ENCODE measurements at regions of chr6 and their contacts with region 1.

Region 1: DNA sequence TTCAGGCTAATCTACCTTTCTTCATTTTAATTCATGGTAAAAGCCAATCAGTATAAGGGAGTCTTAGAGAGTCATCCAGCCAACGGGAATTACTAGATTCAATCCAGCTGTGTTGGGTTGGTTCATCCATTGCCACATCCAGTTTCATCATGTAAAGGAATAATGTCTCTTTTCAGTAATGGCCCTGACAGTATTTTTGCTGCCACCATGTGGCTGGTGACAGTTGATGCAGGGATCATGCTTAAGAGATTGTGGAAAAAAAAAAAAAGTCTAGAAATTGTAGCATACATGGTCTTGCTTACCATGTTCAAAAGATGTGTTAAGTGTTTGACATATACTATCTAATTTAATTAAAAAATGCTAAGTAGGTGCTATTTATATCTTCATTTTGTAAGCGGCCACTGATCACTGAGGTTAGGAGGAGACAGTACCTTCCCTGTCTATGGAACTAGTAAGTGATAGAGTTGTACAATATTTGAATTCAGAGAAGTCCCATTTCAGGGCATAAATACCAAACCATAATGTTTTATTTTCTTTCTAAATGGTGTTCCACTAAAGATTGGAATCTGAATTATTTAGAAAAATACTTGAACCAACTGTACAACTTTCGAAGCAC is 135.9 kb downstream of the KHDRBS2 start:
- DNase-seq: peak; percentile 16
- CTCF ChIP-seq: peak; percentile 72

Region 2: GRCh38 chr6:61809004-61809595 is 341.1 kb before region 1 on chr6:
- CTCF ChIA-PET with region 1: interaction called, 10 read pairs
- POLR2A ChIA-PET with region 1: no interaction called
- DNase-seq: peak; percentile 6
- CTCF ChIP-seq: peak; percentile 44